ENCODE measurements at regions of chr16 and their contacts with region 1.

Region 1: DNA sequence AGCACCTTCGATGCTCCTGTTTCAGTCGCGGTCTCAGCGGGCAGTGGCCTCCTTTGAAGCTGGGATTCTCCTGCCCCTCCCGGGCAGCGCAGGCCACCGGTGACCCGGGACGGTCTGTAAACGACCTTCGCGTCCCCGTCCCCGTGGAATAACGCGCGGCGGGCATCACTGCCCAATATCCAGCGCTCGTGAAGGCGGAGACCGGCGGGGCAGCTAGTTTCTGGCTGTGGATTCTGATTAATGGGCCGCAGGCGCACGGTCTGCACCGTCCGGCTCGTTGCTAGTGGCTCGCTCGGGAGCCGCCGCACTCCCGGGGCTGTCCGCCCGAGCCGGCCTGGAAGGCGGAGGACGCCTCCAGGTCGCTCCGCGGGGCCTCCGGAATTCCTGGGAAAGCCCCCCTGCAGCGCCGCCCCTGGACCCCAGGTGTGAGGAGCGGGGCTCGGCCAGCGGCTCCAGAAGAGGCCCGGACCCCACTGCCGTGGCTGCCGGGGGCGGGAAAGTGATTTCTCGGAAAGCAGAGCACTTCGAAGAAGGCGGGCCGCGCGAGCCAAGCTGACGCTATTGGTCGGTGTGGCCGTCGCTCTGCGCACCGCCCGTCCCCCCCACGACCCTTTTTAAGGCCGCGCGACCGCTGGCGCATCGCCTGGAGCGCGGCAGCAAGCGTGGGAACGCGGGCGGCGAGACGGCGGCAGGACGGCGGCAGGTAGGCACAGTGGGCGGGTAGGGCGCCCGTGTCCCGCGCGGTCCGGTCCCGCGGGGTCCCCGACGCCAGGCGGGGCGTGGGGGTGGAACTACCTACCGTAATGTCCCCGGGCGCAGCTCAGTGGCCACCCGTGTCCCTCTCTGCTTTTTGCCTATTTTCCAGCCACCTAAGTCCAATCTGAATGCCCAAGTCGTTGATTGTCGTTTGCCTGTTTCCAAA is at the start of gene IRF8:
- DNase-seq: peak; percentile 33 to 86 (median 60)
- ATAC-seq: peak; percentile 78
- H3K4me3 ChIP-seq: peak within 1 kb of the TSS; percentile 65
- H3K4me3 Mint-ChIP-seq: peak within 1 kb of the TSS; percentile 91
- H3K27ac ChIP-seq: no peak within 1 kb of the TSS
- H3K27ac Mint-ChIP-seq: no peak within 1 kb of the TSS
- H3K4me1 ChIP-seq: peaks cover 43% of the 10 kb centered on the region
- H3K4me1 Mint-ChIP-seq: peaks cover 45% of the 10 kb centered on the region
- H3K27me3 ChIP-seq: peaks cover 0 to 13% of the 10 kb centered on the region in 2 experiments
- H3K27me3 Mint-ChIP-seq: peaks cover 31% of the 10 kb centered on the region
- CTCF ChIP-seq: no peak
- total RNA-seq, gene IRF8: 11.3 to 13.2 TPM

Region 2: GRCh38 chr16:85935974-85936760 is 37.4 kb after region 1 on chr16:
- CTCF ChIA-PET with region 1: interaction called, 3 read pairs
- POLR2A ChIA-PET with region 1: interaction called, 9 read pairs
- intact Hi-C with region 1: loop called in 1 of 2 experiments (anchors 1 kb)
- DNase-seq: peak; percentile 33 to 89 (median 59)
- ATAC-seq: peak; percentile 90
- H3K4me3 ChIP-seq: peak overlapping the region; percentile 39
- H3K4me3 Mint-ChIP-seq: peak overlapping the region; percentile 61
- H3K27ac ChIP-seq: peak overlapping the region; percentile 69 to 74
- H3K27ac Mint-ChIP-seq: peak overlapping the region; percentile 93
- H3K4me1 ChIP-seq: peaks cover 34% of the 10 kb centered on the region
- H3K4me1 Mint-ChIP-seq: peaks cover 47% of the 10 kb centered on the region
- H3K27me3 ChIP-seq: no peaks in the 10 kb centered on the region
- H3K27me3 Mint-ChIP-seq: no peaks in the 10 kb centered on the region
- CTCF ChIP-seq: no peak

Region 3: DNA sequence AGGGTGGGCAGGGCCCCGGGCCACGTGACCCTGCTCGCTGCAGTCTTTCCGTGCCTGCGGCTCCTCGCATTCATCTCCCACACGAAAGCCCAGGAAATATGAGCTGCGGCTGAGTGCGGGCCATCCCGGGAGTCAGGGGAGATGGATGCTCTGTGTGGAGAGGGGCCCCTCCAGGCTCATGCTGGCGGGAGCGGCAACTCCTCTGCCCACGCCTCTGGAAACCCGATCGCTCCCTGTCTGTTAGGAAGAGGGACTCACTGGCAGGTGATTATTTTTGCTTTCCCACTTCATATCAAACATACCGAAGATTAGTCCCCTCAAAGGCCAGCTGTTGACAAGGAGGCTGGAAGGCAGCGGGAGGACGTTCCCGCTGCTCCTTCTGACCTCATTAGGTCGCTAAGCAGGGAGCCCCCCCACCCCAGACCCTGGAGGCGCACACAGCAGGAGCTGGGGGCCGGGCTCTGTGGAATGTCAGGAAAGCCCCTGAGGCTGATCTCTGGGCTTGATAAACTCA is 908.1 kb after region 1 on chr16:
- CTCF ChIA-PET with region 1: no interaction called
- POLR2A ChIA-PET with region 1: no interaction called
- intact Hi-C with region 1: no loop called
- DNase-seq: no peak
- ATAC-seq: no peak
- H3K4me3 ChIP-seq: no peak overlapping the region
- H3K4me3 Mint-ChIP-seq: no peak overlapping the region
- H3K27ac ChIP-seq: no peak overlapping the region
- H3K27ac Mint-ChIP-seq: no peak overlapping the region
- H3K4me1 ChIP-seq: no peaks in the 10 kb centered on the region
- H3K4me1 Mint-ChIP-seq: no peaks in the 10 kb centered on the region
- H3K27me3 ChIP-seq: peaks cover 11 to 17% of the 10 kb centered on the region in 2 experiments
- H3K27me3 Mint-ChIP-seq: peaks cover 40% of the 10 kb centered on the region
- CTCF ChIP-seq: no peak

Measured in CD4-positive, alpha-beta T cell (primary cell).